Posterior vena cava (tissue), 2 donors: ENCODE measurements at regions of chr5 and their contacts with region 1.

Region 1: DNA sequence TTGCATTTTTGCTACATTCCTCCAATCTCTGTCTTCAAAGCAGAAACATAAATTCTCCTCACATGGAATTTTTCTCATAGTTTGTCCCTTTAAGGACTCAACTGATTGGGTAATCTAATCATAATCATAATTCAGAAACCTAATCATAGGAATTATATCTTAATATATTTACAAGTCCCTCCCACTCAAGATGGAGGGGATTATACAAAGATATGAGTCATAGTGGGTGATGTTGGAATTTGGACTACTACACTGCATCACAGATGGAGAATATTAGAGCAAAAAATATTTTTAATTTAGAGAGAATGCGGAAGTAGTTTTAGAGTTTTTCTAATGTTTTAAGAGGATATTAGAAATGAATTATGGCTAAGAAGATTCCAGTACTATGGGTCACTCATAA is 1034.0 kb downstream of the DTWD2 start:
- DNase-seq: no peak

Region 2: DNA sequence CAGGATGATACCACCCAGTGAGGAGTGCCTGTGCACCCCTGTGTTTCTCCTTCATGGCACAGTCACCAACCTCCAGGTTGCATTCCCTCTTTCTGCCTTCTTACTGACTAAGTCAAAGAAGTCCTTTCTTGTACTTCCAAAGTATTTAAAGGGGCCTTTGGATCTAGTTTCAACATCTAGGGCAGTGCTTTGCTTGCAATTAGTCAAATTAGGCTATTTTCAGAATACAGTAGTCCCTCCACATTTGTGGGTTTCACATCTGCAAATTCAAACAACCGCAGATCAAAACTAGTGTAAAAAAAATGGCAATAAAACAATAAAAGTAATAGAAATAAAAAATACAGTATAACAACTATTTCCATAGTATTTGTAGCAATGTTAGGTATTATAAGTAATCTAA is 1045.8 kb before region 1 on chr5:
- intact Hi-C with region 1: loop called in 1 of 2 experiments (anchors 5 kb)
- DNase-seq: no peak

Region 3: GRCh38 chr5:119452373-119453039 is 1498.2 kb after region 1 on chr5 and contains the start of gene HSD17B4:
- intact Hi-C with region 1: no loop called
- DNase-seq: peak; percentile 97
- total RNA-seq, gene HSD17B4: 144 to 188 TPM